ENCODE measurements at regions of chr16 and their contacts with region 1.

Region 1: DNA sequence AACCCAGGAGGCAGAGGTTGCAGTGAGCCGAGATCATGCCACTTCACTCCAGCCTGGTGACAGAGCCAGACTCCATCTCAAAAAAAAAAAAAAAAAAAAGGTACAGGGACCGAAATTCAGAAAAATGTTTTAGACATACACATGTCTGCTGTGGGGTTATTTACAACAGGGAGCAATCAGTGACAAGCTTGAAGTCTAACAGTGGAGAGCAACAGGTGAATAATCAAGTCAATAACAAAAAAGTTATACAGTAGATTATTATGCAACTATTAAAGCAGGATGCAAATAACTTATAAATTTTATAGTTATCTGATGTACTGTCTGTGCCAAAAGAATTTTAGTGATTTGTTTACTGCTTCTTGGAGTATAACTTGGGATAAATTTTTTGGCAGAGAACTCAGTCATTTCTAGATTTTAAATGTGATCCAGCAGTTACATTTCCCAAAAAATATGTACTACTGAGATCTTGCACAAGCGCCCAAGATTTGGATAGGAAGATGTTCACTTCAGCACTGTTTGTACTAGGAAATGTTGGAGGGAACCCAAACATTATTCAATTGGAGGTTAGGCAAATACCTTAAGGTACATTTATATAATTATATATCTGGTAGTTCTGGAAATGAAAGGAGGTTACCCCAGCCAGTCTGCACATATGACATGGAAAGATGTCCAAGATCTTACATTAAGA is 34.1 kb downstream of the EEF2K start:
- DNase-seq: no peak
- ATAC-seq: no peak
- H3K4me3 Mint-ChIP-seq: peak overlapping the region in 3 of 10 donors; percentile 11 to 55 (median 26)
- H3K27ac Mint-ChIP-seq: peak overlapping the region in 7 of 10 donors; percentile 29 to 94 (median 67)
- H3K4me1 Mint-ChIP-seq: peaks cover 8 to 31% (median 28%) of the 10 kb centered on the region in 4 donors
- H3K27me3 Mint-ChIP-seq: no peaks in the 10 kb centered on the region

Region 2: GRCh38 chr16:22181843-22182242 is 58.3 kb before region 1 on chr16:
- POLR2A ChIA-PET with region 1: no interaction called
- DNase-seq: no peak
- ATAC-seq: no peak
- H3K4me3 Mint-ChIP-seq: no peak overlapping the region
- H3K27ac Mint-ChIP-seq: peak overlapping the region in 1 of 10 donors; percentile 35
- H3K4me1 Mint-ChIP-seq: peaks cover 0 to 11% (median 1%) of the 10 kb centered on the region in 4 donors
- H3K27me3 Mint-ChIP-seq: no peaks in the 10 kb centered on the region

Region 3: DNA sequence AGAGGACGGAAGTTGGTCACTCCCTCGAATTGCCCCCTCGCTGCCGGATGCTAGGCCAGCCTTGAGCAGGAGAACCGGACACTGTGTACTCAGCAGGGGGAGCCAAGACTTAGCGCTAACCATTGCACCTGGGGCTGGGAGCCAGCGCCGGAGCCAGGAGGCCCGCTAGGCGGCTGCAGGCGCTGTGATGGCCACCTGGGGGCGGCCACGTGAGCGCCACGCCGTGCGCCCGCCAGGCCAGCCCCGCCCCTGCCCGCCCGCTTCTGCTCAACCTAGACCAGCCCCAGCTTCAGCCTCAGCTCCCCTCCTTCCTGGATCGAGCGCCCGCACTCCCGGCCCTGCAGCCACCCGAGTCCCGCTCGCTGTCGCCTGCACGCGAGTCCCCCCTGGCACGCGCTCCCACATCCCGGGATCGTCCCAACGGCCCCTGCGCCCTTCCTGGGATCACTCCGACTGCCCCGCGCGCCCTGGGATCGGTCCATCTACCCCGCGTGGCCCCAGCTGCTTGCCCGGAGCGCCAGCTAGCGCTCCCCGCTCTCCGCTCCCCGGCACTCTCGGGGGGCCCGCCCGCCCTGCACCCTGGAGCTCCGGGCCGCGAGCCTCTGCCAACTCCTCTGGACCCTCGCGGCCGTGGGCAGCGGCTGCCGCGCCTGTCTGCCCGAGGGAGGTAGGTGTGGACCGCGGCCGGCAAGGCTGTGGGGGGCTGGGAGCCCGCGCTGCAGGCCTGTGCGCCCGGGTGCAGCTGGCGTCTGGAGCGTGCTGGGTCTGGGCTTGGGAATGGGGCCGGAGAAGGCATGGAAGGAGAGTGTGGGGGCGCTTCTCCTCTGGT is 33.9 kb before region 1 on chr16 and contains the start of gene EEF2K:
- POLR2A ChIA-PET with region 1: interaction called, 10 read pairs
- DNase-seq: peak; percentile 58 to 86 (median 70)
- ATAC-seq: peak; percentile 86 to 91
- H3K4me3 Mint-ChIP-seq: peak within 1 kb of the TSS; percentile 90 to 99 (median 94)
- H3K27ac Mint-ChIP-seq: peak within 1 kb of the TSS; percentile 65 to 95 (median 90)
- H3K4me1 Mint-ChIP-seq: peaks cover 7 to 50% (median 37%) of the 10 kb centered on the region in 4 donors
- H3K27me3 Mint-ChIP-seq: no peaks in the 10 kb centered on the region
- polyA plus RNA-seq, gene EEF2K: 2.0 to 3.2 (median 3.1) TPM